ENCODE measurements at regions of chr9 and their contacts with region 1.

Region 1: GRCh38 chr9:98998441-98999151 is 54.9 kb downstream of the COL15A1 start:
- DNase-seq: peak; percentile 32 to 52 (median 40)
- H3K4me3 ChIP-seq: no peak overlapping the region
- H3K4me3 Mint-ChIP-seq: no peak overlapping the region
- H3K27ac ChIP-seq: no peak overlapping the region
- H3K27ac Mint-ChIP-seq: no peak overlapping the region
- H3K4me1 ChIP-seq: peaks cover 16% of the 10 kb centered on the region
- H3K4me1 Mint-ChIP-seq: peaks cover 15 to 25% (median 16%) of the 10 kb centered on the region in 4 donors
- H3K27me3 ChIP-seq: no peaks in the 10 kb centered on the region
- H3K27me3 Mint-ChIP-seq: peaks cover 0 to 5% of the 10 kb centered on the region in 2 donors

Region 2: GRCh38 chr9:98807070-98807810 is 191.4 kb before region 1 on chr9 and contains the start of gene GALNT12:
- CTCF ChIA-PET with region 1: interaction called, 22 read pairs
- POLR2A ChIA-PET with region 1: no interaction called
- intact Hi-C with region 1: loop called (anchors 2 kb)
- DNase-seq: peak; percentile 37 to 52 (median 46)
- H3K4me3 ChIP-seq: peak within 1 kb of the TSS in 1 of 2 donors; percentile 39
- H3K4me3 Mint-ChIP-seq: peak within 1 kb of the TSS; percentile 88 to 93 (median 89)
- H3K27ac ChIP-seq: no peak within 1 kb of the TSS
- H3K27ac Mint-ChIP-seq: peak within 1 kb of the TSS in 5 of 7 donors; percentile 42 to 76 (median 59)
- H3K4me1 ChIP-seq: peaks cover 17% of the 10 kb centered on the region
- H3K4me1 Mint-ChIP-seq: peaks cover 16 to 29% (median 26%) of the 10 kb centered on the region in 4 donors
- H3K27me3 ChIP-seq: no peaks in the 10 kb centered on the region
- H3K27me3 Mint-ChIP-seq: peaks cover 3 to 4% of the 10 kb centered on the region in 2 donors
- total RNA-seq, gene GALNT12: 11.1 to 13.8 TPM

Region 3: DNA sequence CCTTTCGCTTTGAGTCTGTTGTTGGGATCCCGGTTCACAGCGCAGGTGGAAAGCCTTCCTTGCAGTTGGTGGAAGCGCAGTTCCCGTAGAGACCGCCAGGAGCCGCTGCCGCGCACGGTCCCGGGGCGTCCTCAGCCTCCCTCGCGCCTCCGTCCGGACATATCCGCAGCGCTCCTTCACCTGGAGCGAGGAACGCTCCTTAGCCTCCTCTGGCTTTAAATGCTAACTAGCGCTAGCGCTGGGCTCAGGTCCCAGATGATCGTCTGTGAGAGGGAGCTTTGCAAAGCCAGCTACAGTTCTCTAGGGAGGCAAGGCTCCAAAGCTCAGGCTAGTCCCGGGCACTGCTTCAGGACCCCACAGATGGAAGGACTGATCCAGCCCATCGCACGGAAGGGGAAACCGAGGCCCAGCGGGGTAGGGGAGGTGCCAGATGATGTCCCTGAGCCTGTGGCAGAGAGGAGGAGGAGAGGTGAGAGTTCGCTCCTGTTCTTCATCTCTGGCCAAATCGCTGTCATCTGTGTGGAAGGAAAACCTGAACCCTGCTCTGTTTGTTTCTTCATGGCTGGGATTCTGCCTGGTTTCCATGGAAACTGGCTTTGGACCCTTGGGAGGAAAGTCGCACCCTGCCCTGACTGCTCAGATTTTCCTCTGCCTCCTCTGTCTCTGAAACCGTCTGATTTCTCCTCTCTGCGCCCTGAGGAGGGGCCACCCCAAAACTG is 23.4 kb before region 1 on chr9:
- CTCF ChIA-PET with region 1: interaction called, 38 read pairs
- POLR2A ChIA-PET with region 1: no interaction called
- intact Hi-C with region 1: loop called (anchors 1 kb)
- DNase-seq: peak; percentile 61 to 74 (median 71)
- H3K4me3 ChIP-seq: peak overlapping the region in 1 of 2 donors; percentile 49
- H3K4me3 Mint-ChIP-seq: peak overlapping the region in 7 of 8 donors; percentile 30 to 62 (median 53)
- H3K27ac ChIP-seq: no peak overlapping the region
- H3K27ac Mint-ChIP-seq: no peak overlapping the region
- H3K4me1 ChIP-seq: peaks cover 10% of the 10 kb centered on the region
- H3K4me1 Mint-ChIP-seq: no peaks in the 10 kb centered on the region
- H3K27me3 ChIP-seq: no peaks in the 10 kb centered on the region
- H3K27me3 Mint-ChIP-seq: peaks cover 5% of the 10 kb centered on the region in 2 donors

Region 4: GRCh38 chr9:99012942-99013512 is 14.4 kb after region 1 on chr9:
- CTCF ChIA-PET with region 1: interaction called, 24 read pairs
- POLR2A ChIA-PET with region 1: no interaction called
- intact Hi-C with region 1: no loop called
- DNase-seq: peak in 2 of 5 donors; percentile 12 to 22
- H3K4me3 ChIP-seq: no peak overlapping the region
- H3K4me3 Mint-ChIP-seq: peak overlapping the region in 7 of 8 donors; percentile 4 to 87 (median 75)
- H3K27ac ChIP-seq: no peak overlapping the region
- H3K27ac Mint-ChIP-seq: peak overlapping the region in 6 of 7 donors; percentile 35 to 90 (median 66)
- H3K4me1 ChIP-seq: peaks cover 18% of the 10 kb centered on the region
- H3K4me1 Mint-ChIP-seq: peaks cover 16 to 26% (median 20%) of the 10 kb centered on the region in 4 donors
- H3K27me3 ChIP-seq: no peaks in the 10 kb centered on the region
- H3K27me3 Mint-ChIP-seq: no peaks in the 10 kb centered on the region

Region 5: GRCh38 chr9:99140685-99141314 is 142.2 kb after region 1 on chr9:
- CTCF ChIA-PET with region 1: interaction called, 480 read pairs
- POLR2A ChIA-PET with region 1: interaction called, 10 read pairs
- intact Hi-C with region 1: loop called (anchors 1 kb)
- DNase-seq: peak; percentile 50 to 56 (median 53)
- H3K4me3 ChIP-seq: no peak overlapping the region
- H3K4me3 Mint-ChIP-seq: peak overlapping the region in 1 of 8 donors; percentile 21
- H3K27ac ChIP-seq: no peak overlapping the region
- H3K27ac Mint-ChIP-seq: peak overlapping the region; percentile 16 to 58 (median 43)
- H3K4me1 ChIP-seq: peaks cover 16% of the 10 kb centered on the region
- H3K4me1 Mint-ChIP-seq: peaks cover 21 to 31% (median 24%) of the 10 kb centered on the region in 4 donors
- H3K27me3 ChIP-seq: no peaks in the 10 kb centered on the region
- H3K27me3 Mint-ChIP-seq: no peaks in the 10 kb centered on the region

Region 6: GRCh38 chr9:99150451-99151171 is 152.0 kb after region 1 on chr9:
- CTCF ChIA-PET with region 1: interaction called, 480 read pairs
- POLR2A ChIA-PET with region 1: interaction called, 3 read pairs
- intact Hi-C with region 1: no loop called
- DNase-seq: peak in 2 of 5 donors; percentile 17 to 37
- H3K4me3 ChIP-seq: no peak overlapping the region
- H3K4me3 Mint-ChIP-seq: peak overlapping the region in 1 of 8 donors; percentile 20
- H3K27ac ChIP-seq: no peak overlapping the region
- H3K27ac Mint-ChIP-seq: no peak overlapping the region
- H3K4me1 ChIP-seq: peaks cover 12% of the 10 kb centered on the region
- H3K4me1 Mint-ChIP-seq: peaks cover 4 to 16% (median 8%) of the 10 kb centered on the region in 4 donors
- H3K27me3 ChIP-seq: no peaks in the 10 kb centered on the region
- H3K27me3 Mint-ChIP-seq: no peaks in the 10 kb centered on the region